ENCODE measurements at regions of chr4 and their contacts with region 1.

Region 1: DNA sequence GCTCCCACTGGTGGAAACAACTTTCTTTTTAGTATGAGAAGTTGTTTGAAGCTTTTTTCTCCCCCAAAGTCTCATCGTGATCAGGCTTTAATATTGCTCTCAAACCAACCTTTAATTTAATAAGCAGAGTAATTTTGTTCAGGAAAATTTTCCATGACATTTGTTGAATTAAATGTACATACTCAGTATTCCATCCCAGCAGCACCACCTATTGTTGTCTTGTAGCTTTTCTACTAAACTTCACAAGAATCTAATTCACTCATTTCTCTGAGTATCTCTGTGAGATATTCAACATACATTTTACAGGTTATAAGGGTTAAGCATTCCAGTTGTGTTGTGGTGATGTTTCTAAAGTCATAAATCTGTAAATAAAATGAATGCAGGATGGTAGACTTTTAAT is 218.3 kb upstream of the HAND2 start:
- DNase-seq: no peak
- H3K4me3 ChIP-seq: no peak overlapping the region
- H3K27ac ChIP-seq: no peak overlapping the region
- H3K4me1 ChIP-seq: no peaks in the 10 kb centered on the region
- H3K27me3 ChIP-seq: no peaks in the 10 kb centered on the region
- CTCF ChIP-seq: peak in 1 of 2 donors; percentile 36

Region 2: DNA sequence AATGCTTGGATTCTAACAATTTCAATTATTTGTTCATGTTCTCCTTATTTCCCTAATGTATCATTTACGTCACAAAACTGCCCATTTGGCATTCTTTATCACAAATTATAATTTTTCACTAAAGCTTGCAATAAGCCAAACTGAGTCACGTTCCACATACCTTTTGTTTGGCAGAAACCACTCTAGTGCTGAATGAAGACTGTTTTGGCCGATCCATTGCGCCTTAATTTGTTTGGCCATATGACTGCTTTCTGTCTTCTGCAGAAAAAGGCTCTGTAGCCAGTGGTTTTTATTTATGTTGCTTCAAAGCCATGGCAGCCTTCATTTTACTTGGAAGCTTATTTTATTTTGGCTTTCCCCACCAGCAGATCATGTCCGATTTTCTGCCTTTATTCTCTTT is 33.9 kb before region 1 on chr4:
- CTCF ChIA-PET with region 1: no interaction called
- dilution Hi-C with region 1: loop called (anchors 5 kb)
- in situ Hi-C with region 1: no loop called
- intact Hi-C with region 1: no loop called
- DNase-seq: no peak
- H3K4me3 ChIP-seq: no peak overlapping the region
- H3K27ac ChIP-seq: no peak overlapping the region
- H3K4me1 ChIP-seq: no peaks in the 10 kb centered on the region
- H3K27me3 ChIP-seq: no peaks in the 10 kb centered on the region
- CTCF ChIP-seq: no peak

Region 3: DNA sequence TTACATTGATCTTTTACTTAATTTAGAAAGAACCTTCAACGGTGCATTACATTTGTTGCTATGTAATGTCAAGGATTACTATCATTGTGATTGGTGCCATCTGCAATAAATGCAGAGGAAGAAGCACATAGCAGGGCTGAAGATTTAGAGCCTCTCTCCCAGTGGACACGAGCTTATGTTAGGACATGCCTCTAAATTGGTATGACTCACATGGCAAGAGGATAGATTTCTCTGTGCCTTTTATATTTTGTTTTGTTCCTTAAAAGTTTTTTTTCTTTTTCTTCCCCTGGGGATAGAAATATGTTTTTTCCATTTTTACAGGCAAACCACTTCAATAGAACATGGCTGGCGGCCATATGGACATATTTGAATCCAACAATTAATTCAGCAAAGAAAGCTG is 13.3 kb before region 1 on chr4:
- CTCF ChIA-PET with region 1: interaction called, 13 read pairs
- dilution Hi-C with region 1: no loop called
- in situ Hi-C with region 1: no loop called
- intact Hi-C with region 1: no loop called
- DNase-seq: peak; percentile 29
- H3K4me3 ChIP-seq: no peak overlapping the region
- H3K27ac ChIP-seq: no peak overlapping the region
- H3K4me1 ChIP-seq: no peaks in the 10 kb centered on the region
- H3K27me3 ChIP-seq: no peaks in the 10 kb centered on the region
- CTCF ChIP-seq: no peak

Region 4: GRCh38 chr4:174198828-174199227 is 450.5 kb after region 1 on chr4:
- CTCF ChIA-PET with region 1: no interaction called
- dilution Hi-C with region 1: no loop called
- in situ Hi-C with region 1: no loop called
- intact Hi-C with region 1: no loop called
- DNase-seq: peak; percentile 41
- H3K4me3 ChIP-seq: no peak overlapping the region
- H3K27ac ChIP-seq: no peak overlapping the region
- H3K4me1 ChIP-seq: no peaks in the 10 kb centered on the region
- H3K27me3 ChIP-seq: peaks cover 10% of the 10 kb centered on the region
- CTCF ChIP-seq: no peak